ENCODE measurements at regions of chr11 and their contacts with region 1.

Region 1: DNA sequence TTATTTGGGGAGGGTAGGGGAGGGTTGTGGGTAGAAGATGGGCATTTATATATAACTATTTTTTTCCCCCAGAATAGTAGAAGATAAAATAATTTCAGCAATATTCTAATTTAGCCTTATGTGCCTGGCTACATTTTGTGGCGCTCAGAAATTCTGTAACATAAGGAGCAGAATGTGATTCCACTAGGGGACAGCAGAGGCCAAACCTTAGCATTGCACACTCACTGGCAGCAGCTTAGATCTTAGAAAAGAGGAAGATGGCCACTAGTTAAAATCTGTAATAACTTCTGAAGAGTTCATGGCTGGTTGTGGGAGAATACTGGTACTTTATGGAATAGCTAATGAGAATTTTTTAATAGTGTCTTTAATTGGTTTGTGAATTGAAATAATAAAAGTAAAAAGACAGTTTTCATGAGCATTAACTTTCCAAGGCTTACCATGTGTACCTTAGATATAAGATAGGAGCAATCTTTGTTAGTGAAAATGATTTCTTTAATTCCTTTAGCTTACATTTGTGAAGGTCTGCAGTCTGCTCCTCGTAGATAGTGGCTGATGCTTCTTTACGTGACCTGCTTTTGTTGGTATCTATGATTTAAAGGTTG is 33.1 kb downstream of the DDX10 start:
- DNase-seq: peak; percentile 72
- ATAC-seq: peak; percentile 81
- H3K4me3 ChIP-seq: no peak overlapping the region
- H3K4me3 Mint-ChIP-seq: no peak overlapping the region
- H3K27ac ChIP-seq: no peak overlapping the region
- H3K27ac Mint-ChIP-seq: no peak overlapping the region
- H3K4me1 ChIP-seq: no peaks in the 10 kb centered on the region
- H3K4me1 Mint-ChIP-seq: no peaks in the 10 kb centered on the region
- H3K27me3 ChIP-seq: no peaks in the 10 kb centered on the region
- H3K27me3 Mint-ChIP-seq: no peaks in the 10 kb centered on the region
- CTCF ChIP-seq: peak; percentile 95

Region 2: DNA sequence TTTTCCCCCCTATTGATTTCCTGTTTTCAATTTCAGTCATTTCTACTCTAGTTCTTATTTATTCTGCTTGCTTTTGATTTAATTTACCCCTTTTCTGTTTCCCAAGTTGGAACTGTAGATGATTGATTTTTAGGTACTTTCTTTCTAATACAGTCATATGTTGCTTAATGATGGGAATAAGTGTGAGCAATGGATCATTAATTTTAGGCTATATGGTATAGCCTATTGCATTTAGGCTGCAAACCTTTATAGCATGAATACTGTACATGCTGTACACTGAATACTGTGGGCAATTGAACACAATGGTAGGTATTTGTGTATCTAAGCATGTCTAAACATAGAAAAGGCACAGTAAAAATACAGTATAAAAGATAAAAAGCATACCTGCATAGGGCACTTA is 11.8 kb after region 1 on chr11:
- CTCF ChIA-PET with region 1: interaction called, 11 read pairs
- POLR2A ChIA-PET with region 1: no interaction called
- intact Hi-C with region 1: no loop called
- DNase-seq: no peak
- ATAC-seq: no peak
- H3K4me3 ChIP-seq: no peak overlapping the region
- H3K4me3 Mint-ChIP-seq: no peak overlapping the region
- H3K27ac ChIP-seq: no peak overlapping the region
- H3K27ac Mint-ChIP-seq: no peak overlapping the region
- H3K4me1 ChIP-seq: no peaks in the 10 kb centered on the region
- H3K4me1 Mint-ChIP-seq: peaks cover 12% of the 10 kb centered on the region
- H3K27me3 ChIP-seq: no peaks in the 10 kb centered on the region
- H3K27me3 Mint-ChIP-seq: no peaks in the 10 kb centered on the region
- CTCF ChIP-seq: no peak

Region 3: GRCh38 chr11:108733479-108734116 is 35.6 kb after region 1 on chr11:
- CTCF ChIA-PET with region 1: interaction called, 13 read pairs
- POLR2A ChIA-PET with region 1: no interaction called
- intact Hi-C with region 1: no loop called
- DNase-seq: peak; percentile 45
- ATAC-seq: peak; percentile 78
- H3K4me3 ChIP-seq: no peak overlapping the region
- H3K4me3 Mint-ChIP-seq: peak overlapping the region; percentile 67
- H3K27ac ChIP-seq: peak overlapping the region in 1 of 2 donors; percentile 8
- H3K27ac Mint-ChIP-seq: peak overlapping the region; percentile 73
- H3K4me1 ChIP-seq: peaks cover 6 to 7% of the 10 kb centered on the region in 2 donors
- H3K4me1 Mint-ChIP-seq: peaks cover 29% of the 10 kb centered on the region
- H3K27me3 ChIP-seq: no peaks in the 10 kb centered on the region
- H3K27me3 Mint-ChIP-seq: no peaks in the 10 kb centered on the region
- CTCF ChIP-seq: no peak

Region 4: DNA sequence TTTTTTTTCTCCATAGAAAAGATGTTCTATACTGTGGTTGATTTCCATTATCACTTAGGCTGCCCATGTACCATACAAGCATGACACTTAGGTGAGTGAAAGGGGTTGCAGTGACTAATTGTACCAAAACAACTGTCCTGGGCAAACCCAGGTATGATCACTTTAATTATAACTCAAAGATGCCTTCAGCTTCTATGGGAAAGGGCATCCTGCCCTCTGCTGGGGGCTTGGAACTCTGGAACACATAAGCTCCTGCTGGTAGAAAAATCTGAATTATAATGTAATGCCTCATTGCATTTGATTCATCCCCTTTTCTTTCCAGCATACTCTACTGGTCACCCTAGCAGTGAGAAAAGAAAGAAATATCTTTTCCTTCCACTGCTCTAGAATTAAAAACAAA is 173.2 kb after region 1 on chr11:
- CTCF ChIA-PET with region 1: interaction called, 28 read pairs
- POLR2A ChIA-PET with region 1: no interaction called
- intact Hi-C with region 1: loop called (anchors 1 kb)
- DNase-seq: peak; percentile 34
- ATAC-seq: no peak
- H3K4me3 ChIP-seq: no peak overlapping the region
- H3K4me3 Mint-ChIP-seq: no peak overlapping the region
- H3K27ac ChIP-seq: no peak overlapping the region
- H3K27ac Mint-ChIP-seq: no peak overlapping the region
- H3K4me1 ChIP-seq: no peaks in the 10 kb centered on the region
- H3K4me1 Mint-ChIP-seq: no peaks in the 10 kb centered on the region
- H3K27me3 ChIP-seq: no peaks in the 10 kb centered on the region
- H3K27me3 Mint-ChIP-seq: no peaks in the 10 kb centered on the region
- CTCF ChIP-seq: peak; percentile 50

Region 5: GRCh38 chr11:109697140-109697843 is 999.3 kb after region 1 on chr11:
- CTCF ChIA-PET with region 1: interaction called, 23 read pairs
- POLR2A ChIA-PET with region 1: no interaction called
- intact Hi-C with region 1: no loop called
- DNase-seq: peak; percentile 32
- ATAC-seq: peak; percentile 54
- H3K4me3 ChIP-seq: no peak overlapping the region
- H3K4me3 Mint-ChIP-seq: no peak overlapping the region
- H3K27ac ChIP-seq: no peak overlapping the region
- H3K27ac Mint-ChIP-seq: no peak overlapping the region
- H3K4me1 ChIP-seq: no peaks in the 10 kb centered on the region
- H3K4me1 Mint-ChIP-seq: no peaks in the 10 kb centered on the region
- H3K27me3 ChIP-seq: no peaks in the 10 kb centered on the region
- H3K27me3 Mint-ChIP-seq: peaks cover 11% of the 10 kb centered on the region
- CTCF ChIP-seq: peak; percentile 69

Measured in B cell (primary cell).